Right cardiac atrium (tissue), 5 donors: ENCODE measurements at regions of chr1 and their contacts with region 1.

Region 1: DNA sequence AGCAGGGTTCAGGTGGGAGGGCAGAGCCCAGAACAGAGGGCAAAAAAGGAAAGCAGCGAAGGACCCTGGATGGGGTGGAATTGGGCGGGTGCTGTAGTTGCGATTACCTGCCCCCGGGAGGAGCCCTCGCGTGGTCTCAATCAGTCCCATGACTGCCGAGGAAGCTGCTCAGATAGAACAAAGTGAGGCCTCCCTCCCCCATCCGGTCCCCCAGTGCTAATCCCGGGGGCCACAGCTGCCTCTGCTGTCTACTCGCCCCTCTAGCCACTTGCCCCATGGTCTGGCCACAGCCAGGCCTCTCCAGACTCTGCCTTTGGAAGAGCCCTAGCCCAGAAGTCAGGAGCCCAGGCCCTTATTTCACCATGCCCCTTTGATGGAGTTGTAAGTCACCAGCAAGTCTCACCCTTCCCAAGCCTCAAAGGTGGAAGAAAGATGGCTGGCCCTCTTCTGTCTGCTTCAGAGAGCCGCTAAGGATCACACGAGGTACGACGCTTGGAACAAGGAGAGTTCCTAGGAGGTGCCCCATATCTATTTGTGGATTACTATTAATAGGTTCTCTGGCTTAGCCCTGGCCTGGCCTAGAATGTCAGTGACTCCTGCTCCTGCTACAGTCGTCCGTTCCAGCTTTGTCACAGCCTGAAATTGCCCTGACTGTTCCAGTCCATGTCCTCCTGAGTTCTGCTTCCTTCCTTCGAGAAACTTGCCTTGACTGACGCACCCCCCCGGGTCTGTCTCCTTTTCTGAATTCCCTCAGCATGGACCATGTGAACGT is 16.4 kb downstream of the ECHDC2 start:
- DNase-seq: peak in 2 of 3 donors; percentile 53 to 59
- ATAC-seq: peak; percentile 81 to 88
- H3K4me3 ChIP-seq: no peak overlapping the region
- H3K27ac ChIP-seq: peak overlapping the region; percentile 95
- H3K4me1 ChIP-seq: peaks cover 3% of the 10 kb centered on the region
- H3K27me3 ChIP-seq: no peaks in the 10 kb centered on the region

Region 2: DNA sequence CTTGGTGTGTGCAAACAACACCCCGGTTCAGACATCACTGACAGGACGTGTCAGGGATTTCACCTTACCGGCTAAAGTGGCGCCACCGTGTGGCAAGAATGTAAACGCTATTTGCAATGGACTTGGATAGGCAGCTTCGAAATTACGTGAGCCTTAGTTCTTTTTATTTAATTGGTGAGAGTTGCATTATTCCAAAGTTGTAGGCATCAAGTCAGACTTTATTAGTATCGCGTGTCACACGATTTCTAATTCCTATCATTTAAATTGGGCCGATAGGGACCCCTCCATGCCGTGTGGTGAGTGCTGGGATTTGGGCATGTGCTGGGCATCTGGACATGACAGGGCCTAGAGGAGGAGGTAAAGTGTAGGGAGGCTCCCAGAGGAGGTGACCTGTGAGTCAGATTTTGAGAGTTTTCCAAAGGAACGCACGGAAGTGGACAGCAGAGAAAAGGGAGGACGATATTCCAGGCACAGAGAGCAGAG is 277.0 kb after region 1 on chr1:
- intact Hi-C with region 1: loop called in 1 of 4 experiments (anchors 10 kb)
- DNase-seq: peak; percentile 83 to 94 (median 89)
- ATAC-seq: peak; percentile 8 to 55
- H3K4me3 ChIP-seq: no peak overlapping the region
- H3K27ac ChIP-seq: no peak overlapping the region
- H3K4me1 ChIP-seq: peaks cover 6% of the 10 kb centered on the region
- H3K27me3 ChIP-seq: no peaks in the 10 kb centered on the region